Activated CD4-positive, alpha-beta T cell treated with anti-CD3 and anti-CD28 coated beads for 36 hours (primary cell): ENCODE measurements at regions of chrX and their contacts with region 1.

Region 1: GRCh38 chrX:69538321-69538876 is 34.3 kb downstream of the NALF2 start:
- DNase-seq: peak; percentile 83
- ATAC-seq: peak; percentile 96
- H3K4me3 Mint-ChIP-seq: no peak overlapping the region
- H3K27ac Mint-ChIP-seq: no peak overlapping the region
- H3K4me1 Mint-ChIP-seq: peaks cover 8% of the 10 kb centered on the region
- H3K27me3 Mint-ChIP-seq: peaks cover 9% of the 10 kb centered on the region

Region 2: GRCh38 chrX:69615779-69616456 is 77.5 kb after region 1 on chrX and contains the start of gene EDA:
- CTCF ChIA-PET with region 1: no interaction called
- POLR2A ChIA-PET with region 1: no interaction called
- intact Hi-C with region 1: loop called in 1 of 2 experiments (anchors 1 kb)
- DNase-seq: peak; percentile 77
- ATAC-seq: peak; percentile 99
- H3K4me3 Mint-ChIP-seq: peak within 1 kb of the TSS; percentile 72
- H3K27ac Mint-ChIP-seq: no peak within 1 kb of the TSS
- H3K4me1 Mint-ChIP-seq: peaks cover 2% of the 10 kb centered on the region
- H3K27me3 Mint-ChIP-seq: peaks cover 18% of the 10 kb centered on the region
- total RNA-seq, gene EDA: 0.73 to 1.1 TPM

Region 3: DNA sequence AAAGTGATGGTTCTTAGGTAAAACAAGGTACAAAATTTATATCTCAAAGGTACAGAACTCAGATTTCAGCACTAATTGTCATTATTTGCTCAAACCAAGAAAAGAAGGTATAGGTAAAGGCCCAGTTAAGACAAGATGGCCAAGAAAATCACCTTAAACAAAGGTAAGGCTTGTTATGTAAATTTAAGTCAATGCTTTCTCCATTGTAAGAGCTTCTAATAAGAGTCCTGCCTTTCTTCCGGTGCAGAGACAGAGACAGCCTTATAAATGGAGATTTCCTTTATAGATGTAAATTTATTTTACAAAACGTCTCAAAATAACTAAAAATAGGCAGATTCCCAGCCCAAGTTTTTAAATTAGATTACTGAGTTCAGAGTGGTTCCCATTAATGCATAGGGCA is 167.4 kb after region 1 on chrX:
- CTCF ChIA-PET with region 1: no interaction called
- POLR2A ChIA-PET with region 1: no interaction called
- intact Hi-C with region 1: no loop called
- DNase-seq: no peak
- ATAC-seq: no peak
- H3K4me3 Mint-ChIP-seq: no peak overlapping the region
- H3K27ac Mint-ChIP-seq: no peak overlapping the region
- H3K4me1 Mint-ChIP-seq: no peaks in the 10 kb centered on the region
- H3K27me3 Mint-ChIP-seq: no peaks in the 10 kb centered on the region

Region 4: DNA sequence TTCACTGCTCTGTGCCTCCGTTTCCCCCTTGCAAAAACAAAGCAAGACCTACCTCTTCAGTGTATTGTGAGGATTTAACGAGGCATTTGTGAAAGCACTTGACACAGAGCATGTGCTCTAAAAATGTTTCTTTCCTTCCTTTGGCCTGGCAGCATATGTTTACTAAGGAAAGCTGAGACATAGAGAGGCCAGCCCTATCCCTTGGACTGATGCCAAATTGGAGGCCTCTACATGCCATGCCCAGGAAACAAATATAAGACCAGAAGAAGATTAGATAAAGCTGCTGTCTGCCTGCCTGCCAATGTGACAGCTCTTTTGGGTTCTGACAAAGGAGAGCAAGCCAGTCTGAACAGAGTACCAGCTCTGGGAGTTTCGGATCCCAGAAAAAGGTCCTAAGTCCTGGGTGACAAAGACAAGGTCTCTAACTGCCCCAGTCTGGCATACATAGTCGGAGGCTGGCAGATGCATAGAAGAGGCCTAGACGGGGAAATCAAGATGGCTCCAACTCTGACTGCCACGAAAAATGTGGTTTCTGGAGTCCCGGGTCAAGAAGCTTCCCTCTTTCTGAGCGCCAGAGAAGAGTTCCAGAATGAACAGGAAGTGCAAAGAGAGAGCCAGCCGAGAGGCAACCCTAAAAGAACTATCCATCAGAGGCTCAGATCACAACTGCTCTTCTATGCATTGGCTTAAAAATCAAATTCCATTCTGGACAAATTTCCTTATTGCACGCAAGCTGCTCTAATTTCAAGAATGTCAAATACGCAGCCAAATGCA is 549.6 kb after region 1 on chrX:
- CTCF ChIA-PET with region 1: no interaction called
- POLR2A ChIA-PET with region 1: no interaction called
- intact Hi-C with region 1: loop called in 1 of 2 experiments (anchors 2 kb)
- DNase-seq: no peak
- ATAC-seq: no peak
- H3K4me3 Mint-ChIP-seq: no peak overlapping the region
- H3K27ac Mint-ChIP-seq: no peak overlapping the region
- H3K4me1 Mint-ChIP-seq: no peaks in the 10 kb centered on the region
- H3K27me3 Mint-ChIP-seq: no peaks in the 10 kb centered on the region

Region 5: GRCh38 chrX:70096052-70096451 is 557.7 kb after region 1 on chrX:
- CTCF ChIA-PET with region 1: interaction called, 4 read pairs
- POLR2A ChIA-PET with region 1: no interaction called
- intact Hi-C with region 1: loop called in 1 of 2 experiments (anchors 5 kb)
- DNase-seq: no peak
- ATAC-seq: no peak
- H3K4me3 Mint-ChIP-seq: no peak overlapping the region
- H3K27ac Mint-ChIP-seq: no peak overlapping the region
- H3K4me1 Mint-ChIP-seq: no peaks in the 10 kb centered on the region
- H3K27me3 Mint-ChIP-seq: peaks cover 5% of the 10 kb centered on the region